BJ (cell line): ENCODE measurements at regions of chr1 and their contacts with region 1.

Region 1: DNA sequence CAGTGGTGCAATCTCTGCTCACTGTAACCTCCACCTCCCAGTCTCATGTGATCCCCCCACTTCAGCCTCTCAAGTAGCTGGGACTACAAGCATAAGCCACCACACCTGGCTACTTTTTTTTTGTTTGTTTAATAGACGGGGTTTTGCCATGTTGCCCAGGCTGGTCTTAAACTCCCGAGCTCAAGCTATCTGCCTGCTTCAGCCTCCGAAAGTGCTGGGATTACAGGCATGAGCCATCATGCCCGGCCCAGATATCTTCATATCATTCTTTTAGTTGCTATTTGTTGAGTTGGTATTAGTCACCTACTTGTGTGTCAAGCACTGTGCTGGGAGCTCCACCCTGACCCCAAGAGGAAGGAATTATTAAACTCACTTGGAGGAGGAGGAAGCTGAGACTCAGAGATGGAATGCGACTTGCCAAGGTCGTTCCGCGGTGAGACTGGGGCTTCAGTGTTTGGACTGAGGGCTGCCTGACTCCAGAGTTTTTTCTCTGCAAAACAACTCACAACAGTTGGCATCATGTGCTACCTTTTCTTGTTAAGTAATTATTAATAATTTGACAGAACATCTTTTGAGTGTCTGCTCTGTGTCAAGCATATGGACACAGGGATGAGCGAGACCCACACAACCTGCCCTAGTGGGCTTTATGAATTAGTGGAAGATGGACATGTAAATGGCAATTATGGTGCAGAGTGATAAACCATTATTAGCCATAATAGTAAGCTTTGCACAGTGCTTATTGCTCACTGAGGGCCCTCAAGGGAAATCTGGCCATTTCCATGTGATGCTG is 132.0 kb downstream of the FOXD2 start:
- DNase-seq: peak; percentile 85
- H3K4me3 ChIP-seq: no peak overlapping the region
- H3K27me3 ChIP-seq: no peaks in the 10 kb centered on the region
- CTCF ChIP-seq: peak; percentile 76

Region 2: DNA sequence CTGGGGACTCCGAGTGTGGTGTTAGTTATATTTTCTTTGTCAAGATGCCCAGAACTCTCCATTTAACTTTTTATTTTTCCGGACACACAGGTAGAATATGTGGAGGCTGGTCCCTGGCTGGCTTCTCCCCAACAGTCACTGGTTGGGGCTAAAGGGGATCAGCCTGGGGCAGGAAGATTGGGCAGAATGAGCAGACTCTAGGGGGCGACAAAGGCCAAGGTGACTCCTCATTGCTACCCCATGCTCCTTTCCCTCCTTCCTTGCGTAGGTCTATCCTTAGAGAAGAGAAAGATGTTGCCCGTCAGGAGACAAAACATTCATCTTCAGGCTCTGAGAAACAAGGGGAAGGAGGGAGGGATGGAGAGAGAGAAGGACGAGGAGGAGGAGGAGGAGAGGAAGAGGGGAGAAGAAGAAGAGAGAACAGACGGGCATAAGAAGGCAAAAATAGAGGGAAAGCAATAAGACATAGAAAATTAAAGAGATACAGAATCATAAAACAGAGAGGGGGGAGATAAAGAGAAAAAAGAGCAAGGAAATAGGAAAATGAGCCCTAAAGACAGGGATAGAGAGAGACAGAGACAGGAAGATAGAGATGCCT is 42.1 kb before region 1 on chr1:
- CTCF ChIA-PET with region 1: interaction called, 10 read pairs
- POLR2A ChIA-PET with region 1: no interaction called
- DNase-seq: no peak
- H3K4me3 ChIP-seq: no peak overlapping the region
- H3K27me3 ChIP-seq: peaks cover 4% of the 10 kb centered on the region
- CTCF ChIP-seq: peak; percentile 52

Region 3: GRCh38 chr1:47558601-47559593 is 11.0 kb before region 1 on chr1:
- CTCF ChIA-PET with region 1: interaction called, 4 read pairs
- POLR2A ChIA-PET with region 1: interaction called, 15 read pairs
- DNase-seq: no peak
- H3K4me3 ChIP-seq: no peak overlapping the region
- H3K27me3 ChIP-seq: peaks cover 3% of the 10 kb centered on the region
- CTCF ChIP-seq: no peak

Region 4: DNA sequence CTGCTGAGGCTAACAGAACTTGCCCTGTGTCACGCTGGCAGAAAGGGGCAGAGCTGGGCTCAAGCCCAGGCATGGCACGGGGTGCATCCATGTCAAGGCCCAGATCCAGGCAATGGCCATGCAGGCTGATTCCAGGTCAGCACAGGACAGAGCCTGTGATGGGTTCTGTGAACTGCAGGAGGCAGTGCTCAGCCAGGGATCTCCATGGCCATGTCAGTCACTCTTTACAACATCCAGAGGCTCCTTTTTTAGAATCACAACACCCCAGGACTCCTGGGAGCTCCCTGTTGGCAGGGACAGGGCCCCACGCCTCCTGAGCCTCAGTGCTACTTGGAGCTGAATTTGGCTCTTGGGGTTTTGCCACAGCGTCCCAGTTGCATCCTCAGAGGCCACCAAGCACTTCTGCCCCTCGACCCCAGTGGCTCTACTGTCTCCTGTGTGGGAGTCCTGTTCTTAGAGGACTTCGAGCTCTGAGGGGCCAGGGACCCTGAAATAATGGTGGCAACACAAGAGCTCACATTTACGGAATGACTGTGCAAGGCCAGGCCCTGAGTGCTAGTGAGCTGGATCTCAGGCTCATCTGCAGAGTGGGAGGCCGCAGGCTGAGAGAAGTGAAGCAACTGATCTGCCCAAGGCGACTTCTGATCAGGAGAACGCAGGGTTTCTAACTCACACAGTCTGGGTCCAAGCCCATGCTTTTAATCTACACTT is 215.8 kb after region 1 on chr1:
- CTCF ChIA-PET with region 1: no interaction called
- POLR2A ChIA-PET with region 1: no interaction called
- DNase-seq: no peak
- H3K4me3 ChIP-seq: no peak overlapping the region
- H3K27me3 ChIP-seq: no peaks in the 10 kb centered on the region; the same call in 1 of the 2 replicates
- CTCF ChIP-seq: no peak